CD8-positive, alpha-beta T cell (primary cell): ENCODE measurements at regions of chr14 and their contacts with region 1.

Region 1: GRCh38 chr14:89767861-89768268 is 186.7 kb downstream of the EFCAB11 start:
- DNase-seq: peak; percentile 42 to 87 (median 67)
- ATAC-seq: peak; percentile 93
- H3K4me3 ChIP-seq: no peak overlapping the region
- H3K4me3 Mint-ChIP-seq: peak overlapping the region; percentile 67
- H3K27ac ChIP-seq: no peak overlapping the region
- H3K27ac Mint-ChIP-seq: peak overlapping the region; percentile 84
- H3K4me1 ChIP-seq: peaks cover 29% of the 10 kb centered on the region
- H3K4me1 Mint-ChIP-seq: peaks cover 50% of the 10 kb centered on the region
- H3K27me3 ChIP-seq: no peaks in the 10 kb centered on the region
- H3K27me3 Mint-ChIP-seq: no peaks in the 10 kb centered on the region
- CTCF ChIP-seq: peak; percentile 87

Region 2: DNA sequence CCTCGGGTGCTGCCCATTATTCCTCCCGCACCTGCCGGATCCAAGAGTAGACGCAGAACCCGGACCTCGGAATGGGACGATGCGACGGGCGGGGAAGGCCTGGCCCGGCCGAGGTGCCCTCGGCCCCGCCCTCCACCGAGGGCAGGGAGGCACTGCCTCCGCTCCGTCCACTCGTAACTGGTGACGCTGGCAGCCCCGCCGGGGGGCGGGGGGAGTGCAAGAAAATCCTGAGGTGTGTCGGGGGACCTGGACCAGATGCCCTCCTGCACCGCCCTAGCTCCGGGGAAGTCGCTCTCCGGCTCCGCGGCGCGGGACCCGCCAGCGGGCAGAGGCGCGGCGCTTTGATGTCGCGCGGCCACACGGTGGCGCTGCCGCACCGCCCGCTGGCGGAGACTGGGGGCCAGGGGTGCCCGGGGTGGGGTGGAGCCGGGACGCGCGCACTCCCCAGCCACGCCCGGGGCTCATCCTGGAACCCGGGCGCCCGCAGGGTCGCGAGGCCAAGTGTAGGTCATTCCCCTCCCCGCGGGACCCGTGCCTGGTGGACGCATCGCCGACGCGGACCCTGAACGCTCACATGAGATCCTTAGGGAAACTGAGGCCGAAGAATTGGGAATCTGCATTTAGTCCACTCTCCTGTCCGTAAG is 740.6 kb before region 1 on chr14:
- CTCF ChIA-PET with region 1: interaction called, 4 read pairs
- POLR2A ChIA-PET with region 1: no interaction called
- intact Hi-C with region 1: loop called (anchors 5 kb)
- DNase-seq: peak; percentile 26 to 77 (median 57)
- ATAC-seq: peak; percentile 91
- H3K4me3 ChIP-seq: peak overlapping the region; percentile 33 to 61
- H3K4me3 Mint-ChIP-seq: peak overlapping the region; percentile 69
- H3K27ac ChIP-seq: no peak overlapping the region
- H3K27ac Mint-ChIP-seq: no peak overlapping the region
- H3K4me1 ChIP-seq: peaks cover 13% of the 10 kb centered on the region
- H3K4me1 Mint-ChIP-seq: peaks cover 3% of the 10 kb centered on the region
- H3K27me3 ChIP-seq: peaks cover 21 to 23% of the 10 kb centered on the region in 2 experiments
- H3K27me3 Mint-ChIP-seq: peaks cover 72% of the 10 kb centered on the region
- CTCF ChIP-seq: peak; percentile 74

Region 3: DNA sequence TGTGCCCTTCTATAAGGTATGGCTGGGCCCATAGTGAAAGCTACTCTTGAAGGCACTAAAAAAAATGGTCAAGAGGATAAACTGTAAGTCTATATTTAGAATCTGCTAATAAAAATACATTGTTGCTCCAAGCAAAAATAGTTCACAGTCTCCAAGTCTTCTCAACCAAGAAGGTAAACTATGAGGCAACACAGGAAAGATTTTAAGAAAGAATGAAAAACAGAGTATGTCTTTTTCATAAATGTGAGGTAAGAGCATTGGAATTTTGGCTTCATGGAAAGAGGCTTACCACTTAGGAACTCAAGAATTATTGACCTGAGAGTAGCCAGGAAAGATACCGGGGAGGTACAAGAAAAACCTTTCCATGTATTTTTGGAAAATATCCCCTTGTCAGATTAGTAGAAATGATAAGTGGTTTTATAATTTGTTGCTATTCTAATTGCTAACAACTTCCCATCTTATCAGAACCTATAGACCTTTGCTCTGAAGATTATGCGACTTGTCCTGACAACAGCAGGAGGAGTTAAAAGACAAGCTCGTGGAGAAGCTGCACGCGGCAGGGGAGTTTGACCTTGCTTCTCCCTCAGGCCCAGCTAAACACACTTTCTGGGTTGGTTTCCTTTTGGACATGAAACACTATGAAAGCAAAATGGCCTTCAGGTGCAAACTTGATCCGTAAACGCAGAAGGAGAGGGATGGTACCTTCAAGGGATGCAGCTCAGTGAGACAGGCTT is 588.9 kb before region 1 on chr14:
- CTCF ChIA-PET with region 1: interaction called, 16 read pairs
- POLR2A ChIA-PET with region 1: interaction called, 3 read pairs
- intact Hi-C with region 1: loop called (anchors 1 kb)
- DNase-seq: no peak
- ATAC-seq: no peak
- H3K4me3 ChIP-seq: no peak overlapping the region
- H3K4me3 Mint-ChIP-seq: no peak overlapping the region
- H3K27ac ChIP-seq: no peak overlapping the region
- H3K27ac Mint-ChIP-seq: peak overlapping the region; percentile 35
- H3K4me1 ChIP-seq: no peaks in the 10 kb centered on the region
- H3K4me1 Mint-ChIP-seq: peaks cover 17% of the 10 kb centered on the region
- H3K27me3 ChIP-seq: no peaks in the 10 kb centered on the region
- H3K27me3 Mint-ChIP-seq: no peaks in the 10 kb centered on the region
- CTCF ChIP-seq: no peak

Region 4: DNA sequence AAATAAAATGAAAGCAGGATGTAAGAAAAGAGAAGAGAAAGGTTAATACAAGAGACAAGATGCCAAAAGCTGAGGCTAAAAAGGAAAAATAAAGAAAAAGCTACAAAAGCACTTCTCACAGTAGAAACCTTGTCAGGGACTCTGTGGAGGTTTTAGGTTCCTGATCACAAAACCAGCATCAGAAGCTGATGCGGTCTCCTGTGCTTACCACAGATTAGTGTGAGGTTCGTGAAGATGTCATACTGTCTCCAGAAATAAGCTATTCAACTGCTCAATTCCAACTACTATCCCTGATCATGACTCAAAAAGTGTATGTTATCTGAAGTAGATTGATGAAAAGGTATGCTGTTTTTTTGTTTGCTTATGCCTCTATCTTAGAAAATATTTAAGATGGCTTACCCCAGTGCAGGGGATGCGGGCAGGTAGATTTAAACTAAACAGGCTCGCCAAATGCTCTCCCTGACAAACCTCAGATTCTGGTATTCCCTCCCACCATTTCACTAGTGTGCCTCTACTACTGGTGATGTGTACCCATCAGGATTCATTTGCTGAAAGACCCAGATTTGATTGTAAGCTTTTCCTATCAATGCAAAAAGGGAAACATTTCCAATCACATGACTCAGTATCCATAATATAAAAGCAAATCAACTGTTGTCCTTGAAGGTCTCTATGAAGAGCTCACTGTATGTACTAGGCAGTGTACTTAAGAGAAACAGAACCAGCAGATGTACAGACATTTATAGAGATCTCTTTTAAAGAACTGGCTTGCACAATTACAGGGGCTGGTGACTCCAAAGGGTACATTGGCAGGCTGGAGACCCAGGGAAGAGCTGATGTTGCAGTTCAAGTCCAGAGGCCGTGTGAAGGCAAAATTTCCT is 181.4 kb before region 1 on chr14:
- CTCF ChIA-PET with region 1: interaction called, 10 read pairs
- POLR2A ChIA-PET with region 1: no interaction called
- intact Hi-C with region 1: no loop called
- DNase-seq: peak in 5 of 9 experiments; percentile 17 to 71 (median 53)
- ATAC-seq: peak; percentile 92
- H3K4me3 ChIP-seq: no peak overlapping the region
- H3K4me3 Mint-ChIP-seq: peak overlapping the region; percentile 54
- H3K27ac ChIP-seq: peak overlapping the region in 1 of 2 experiments; percentile 36
- H3K27ac Mint-ChIP-seq: peak overlapping the region; percentile 73
- H3K4me1 ChIP-seq: peaks cover 21% of the 10 kb centered on the region
- H3K4me1 Mint-ChIP-seq: peaks cover 80% of the 10 kb centered on the region
- H3K27me3 ChIP-seq: no peaks in the 10 kb centered on the region
- H3K27me3 Mint-ChIP-seq: no peaks in the 10 kb centered on the region
- CTCF ChIP-seq: no peak

Region 5: DNA sequence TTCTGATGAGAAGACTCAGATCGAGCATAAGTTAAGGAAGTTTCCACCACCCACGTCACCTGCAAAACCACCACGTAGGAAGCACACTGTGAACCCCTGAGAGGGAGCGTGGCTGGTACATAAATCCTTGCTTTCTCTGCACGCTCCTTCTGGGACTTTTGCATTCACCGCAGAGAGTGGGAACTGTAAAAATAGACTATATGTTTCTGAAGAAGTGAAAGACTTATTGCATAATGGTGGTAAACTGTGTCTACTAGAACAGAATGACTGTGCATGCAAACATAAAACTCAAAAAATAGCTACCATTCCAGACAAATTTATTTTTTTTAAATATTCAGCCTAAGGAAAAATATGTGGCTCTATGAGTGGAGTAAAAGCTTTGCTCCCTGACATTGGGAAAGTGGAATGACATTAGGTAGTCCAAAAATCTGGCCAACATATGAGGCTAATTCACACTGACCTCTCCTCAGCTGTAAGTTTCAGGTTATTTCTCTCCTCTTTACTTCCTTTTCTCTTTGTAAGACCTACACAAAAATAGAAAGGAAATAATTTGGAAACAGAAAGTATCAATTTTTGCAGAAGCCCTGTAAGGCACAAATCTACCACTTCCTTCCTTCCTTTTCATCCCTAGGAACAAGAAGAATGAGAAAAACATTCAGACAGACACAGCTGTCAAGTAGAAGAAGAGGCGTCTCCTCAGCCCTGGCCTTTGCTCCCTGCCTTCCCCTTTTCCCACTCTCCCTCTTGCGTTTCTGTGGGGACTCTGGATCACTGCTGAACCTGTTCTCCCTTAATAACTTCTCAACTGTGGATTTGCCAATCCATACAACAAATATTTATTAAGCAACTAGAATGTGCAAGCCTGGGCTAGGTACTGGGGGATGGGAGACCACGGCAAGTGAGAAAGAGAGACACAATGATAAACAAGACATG is 86.5 kb before region 1 on chr14:
- CTCF ChIA-PET with region 1: interaction called, 3 read pairs
- POLR2A ChIA-PET with region 1: interaction called, 3 read pairs
- intact Hi-C with region 1: loop called in 1 of 2 experiments (anchors 5 kb)
- DNase-seq: peak in 6 of 9 experiments; percentile 21 to 64 (median 40)
- ATAC-seq: peak; percentile 69
- H3K4me3 ChIP-seq: peak overlapping the region; percentile 15 to 36
- H3K4me3 Mint-ChIP-seq: peak overlapping the region; percentile 73
- H3K27ac ChIP-seq: peak overlapping the region; percentile 12 to 57
- H3K27ac Mint-ChIP-seq: peak overlapping the region; percentile 89
- H3K4me1 ChIP-seq: peaks cover 34% of the 10 kb centered on the region
- H3K4me1 Mint-ChIP-seq: peaks cover 42% of the 10 kb centered on the region
- H3K27me3 ChIP-seq: no peaks in the 10 kb centered on the region
- H3K27me3 Mint-ChIP-seq: no peaks in the 10 kb centered on the region
- CTCF ChIP-seq: no peak

Region 6: DNA sequence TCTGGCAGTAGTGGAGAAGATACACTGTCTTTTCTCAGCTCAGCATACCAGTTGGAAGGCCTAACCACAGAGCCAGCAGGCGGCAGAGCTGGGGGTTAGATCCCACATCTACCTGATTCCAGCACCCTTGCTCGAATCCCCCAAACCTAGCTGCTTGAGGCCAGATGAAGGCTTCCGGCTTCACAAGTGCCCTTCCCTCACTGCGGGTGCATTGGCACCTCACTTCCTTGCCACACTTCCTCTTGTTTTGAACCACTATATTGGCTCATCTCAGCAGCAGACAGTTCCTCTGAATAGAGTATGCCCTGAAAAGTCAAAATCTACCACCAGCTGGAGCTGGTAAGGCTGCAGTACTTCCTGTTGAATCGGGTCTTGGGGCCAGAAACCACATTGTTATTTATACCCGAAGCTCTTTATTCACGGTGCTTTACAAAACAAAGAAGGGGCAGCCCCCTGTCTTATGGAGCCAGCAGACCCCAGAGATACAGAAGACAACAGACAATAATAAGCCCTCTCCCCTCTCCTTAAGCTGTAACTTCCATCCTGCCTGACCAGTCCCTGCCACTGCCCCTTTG is 47.0 kb before region 1 on chr14:
- CTCF ChIA-PET with region 1: interaction called, 31 read pairs
- POLR2A ChIA-PET with region 1: interaction called, 10 read pairs
- intact Hi-C with region 1: loop called (anchors 1 to 2 kb)
- DNase-seq: peak; percentile 63 to 96 (median 77)
- ATAC-seq: peak; percentile 89
- H3K4me3 ChIP-seq: peak overlapping the region; percentile 17 to 29
- H3K4me3 Mint-ChIP-seq: peak overlapping the region; percentile 64
- H3K27ac ChIP-seq: peak overlapping the region; percentile 70 to 89
- H3K27ac Mint-ChIP-seq: peak overlapping the region; percentile 97
- H3K4me1 ChIP-seq: peaks cover 86% of the 10 kb centered on the region
- H3K4me1 Mint-ChIP-seq: peaks cover 85% of the 10 kb centered on the region
- H3K27me3 ChIP-seq: no peaks in the 10 kb centered on the region
- H3K27me3 Mint-ChIP-seq: no peaks in the 10 kb centered on the region
- CTCF ChIP-seq: no peak